ENCODE measurements at regions of chr15 and their contacts with region 1.

Region 1: DNA sequence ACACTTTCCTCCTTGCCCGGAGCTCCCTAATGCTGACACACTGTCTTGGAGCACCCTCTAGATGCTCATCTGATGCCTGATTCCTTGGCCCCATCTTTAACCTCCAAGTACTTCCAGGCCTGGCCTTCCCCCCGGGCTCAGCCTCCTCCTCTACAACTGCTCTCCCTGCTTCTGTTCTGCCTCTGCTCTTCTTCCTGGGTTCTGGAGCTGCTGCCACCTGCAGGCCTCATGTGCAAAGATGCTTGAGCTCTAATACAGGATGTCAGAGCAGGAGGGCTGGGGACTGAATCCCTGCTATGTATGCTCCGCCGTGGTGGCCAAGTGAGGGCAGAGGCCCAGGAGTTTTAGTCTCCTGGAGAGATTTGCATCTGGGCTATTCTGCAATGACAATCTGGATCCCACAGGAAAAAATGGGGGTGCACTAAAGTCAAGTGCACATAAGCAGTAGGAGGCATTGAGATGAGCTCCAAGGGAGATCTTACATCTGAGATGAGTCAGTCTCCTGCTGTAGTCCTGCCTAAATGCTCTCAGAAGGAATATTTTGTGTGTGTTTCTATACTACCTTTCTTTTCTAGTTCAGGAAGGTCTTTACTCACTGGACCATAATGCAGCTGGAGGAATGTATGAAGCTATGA is 296.3 kb downstream of the UACA start:
- DNase-seq: peak; percentile 35 to 46
- ATAC-seq: peak; percentile 52 to 78 (median 62)
- H3K4me3 ChIP-seq: no peak overlapping the region
- H3K27ac ChIP-seq: no peak overlapping the region
- H3K4me1 ChIP-seq: peaks cover 0 to 21% (median 0%) of the 10 kb centered on the region in 9 donors
- H3K27me3 ChIP-seq: peaks cover 0 to 43% (median 16%) of the 10 kb centered on the region in 7 donors
- CTCF ChIP-seq: peak; percentile 29 to 72 (median 61)

Region 2: DNA sequence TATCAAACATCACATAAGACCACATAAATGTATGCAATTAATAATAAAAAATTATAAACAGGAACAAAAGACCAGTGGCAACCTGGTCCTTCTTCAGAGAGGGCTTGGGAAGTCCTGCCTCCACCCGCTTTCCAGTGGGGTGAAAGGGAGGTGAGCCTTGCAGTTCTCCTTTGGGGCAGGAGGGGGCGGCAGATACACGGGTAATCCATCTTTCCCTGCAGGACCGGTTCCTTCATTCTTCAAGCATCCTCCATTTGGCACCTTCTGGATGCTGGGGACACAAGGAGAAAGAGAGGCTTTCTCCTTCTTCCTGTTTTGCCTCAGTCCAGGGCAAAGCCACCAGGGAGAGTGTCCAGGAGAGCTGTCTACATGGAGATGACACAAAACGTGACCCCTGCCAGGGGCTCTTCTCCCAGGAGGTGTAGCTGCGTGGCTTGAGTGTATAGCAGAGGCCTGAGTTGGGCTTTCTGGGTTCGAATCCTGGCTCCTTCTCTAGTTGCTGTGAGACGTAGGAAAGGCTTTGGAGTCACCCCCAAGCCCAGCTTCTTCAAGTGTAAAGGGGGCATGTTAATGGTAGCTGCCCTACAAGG is 991.1 kb before region 1 on chr15:
- intact Hi-C with region 1: loop called in 2 of 10 experiments (anchors 5 kb)
- DNase-seq: peak; percentile 73 to 81
- ATAC-seq: peak; percentile 65 to 89 (median 80)
- H3K4me3 ChIP-seq: no peak overlapping the region
- H3K27ac ChIP-seq: no peak overlapping the region
- H3K4me1 ChIP-seq: peaks cover 0 to 3% (median 0%) of the 10 kb centered on the region in 9 donors
- H3K27me3 ChIP-seq: peaks cover 0 to 8% (median 0%) of the 10 kb centered on the region in 7 donors
- CTCF ChIP-seq: peak; percentile 82 to 97 (median 94)

Region 3: GRCh38 chr15:69576035-69576526 is 890.9 kb before region 1 on chr15:
- intact Hi-C with region 1: loop called in 1 of 10 experiments (anchors 10 kb)
- DNase-seq: peak; percentile 43 to 58
- ATAC-seq: peak; percentile 75 to 92 (median 86)
- H3K4me3 ChIP-seq: no peak overlapping the region
- H3K27ac ChIP-seq: no peak overlapping the region
- H3K4me1 ChIP-seq: peaks cover 0 to 31% (median 0%) of the 10 kb centered on the region in 9 donors
- H3K27me3 ChIP-seq: peaks cover 0 to 31% (median 17%) of the 10 kb centered on the region in 7 donors
- CTCF ChIP-seq: peak; percentile 49 to 78 (median 71)

Region 4: GRCh38 chr15:69648212-69648611 is 818.8 kb before region 1 on chr15:
- intact Hi-C with region 1: no loop called
- DNase-seq: no peak
- ATAC-seq: no peak
- H3K4me3 ChIP-seq: no peak overlapping the region
- H3K27ac ChIP-seq: no peak overlapping the region
- H3K4me1 ChIP-seq: peaks cover 0 to 12% (median 0%) of the 10 kb centered on the region in 9 donors
- H3K27me3 ChIP-seq: peaks cover 0 to 69% (median 53%) of the 10 kb centered on the region in 7 donors
- CTCF ChIP-seq: no peak

Region 5: GRCh38 chr15:69729161-69729748 is 737.8 kb before region 1 on chr15:
- intact Hi-C with region 1: loop called in 7 of 10 experiments (anchors 5 to 10 kb)
- DNase-seq: peak in 1 of 2 donors; percentile 17
- ATAC-seq: no peak
- H3K4me3 ChIP-seq: no peak overlapping the region
- H3K27ac ChIP-seq: no peak overlapping the region
- H3K4me1 ChIP-seq: peaks cover 0 to 44% (median 0%) of the 10 kb centered on the region in 9 donors
- H3K27me3 ChIP-seq: peaks cover 0 to 32% (median 9%) of the 10 kb centered on the region in 7 donors
- CTCF ChIP-seq: peak; percentile 64 to 84 (median 73)

Region 6: GRCh38 chr15:69735121-69735520 is 731.9 kb before region 1 on chr15:
- intact Hi-C with region 1: loop called in 6 of 10 experiments (anchors 5 to 10 kb)
- DNase-seq: no peak
- ATAC-seq: no peak
- H3K4me3 ChIP-seq: no peak overlapping the region
- H3K27ac ChIP-seq: no peak overlapping the region
- H3K4me1 ChIP-seq: peaks cover 0 to 9% (median 0%) of the 10 kb centered on the region in 9 donors
- H3K27me3 ChIP-seq: peaks cover 0 to 34% (median 12%) of the 10 kb centered on the region in 7 donors
- CTCF ChIP-seq: no peak

Measured in heart right ventricle (tissue), 16 donors.